Activated CD4-positive, alpha-beta T cell treated with anti-CD3 and anti-CD28 coated beads, Interleukin-2, amount 10 ng/mL, durations not matched to agents 24 days and 14 days (primary cell): ENCODE measurements at regions of chr6 and their contacts with region 1.

Region 1: GRCh38 chr6:43263314-43264178 is 20.3 kb downstream of the TTBK1 start:
- DNase-seq: peak; percentile 93
- H3K4me3 Mint-ChIP-seq: no peak overlapping the region
- H3K27ac Mint-ChIP-seq: no peak overlapping the region
- H3K4me1 Mint-ChIP-seq: peaks cover 2% of the 10 kb centered on the region
- H3K27me3 Mint-ChIP-seq: peaks cover 5% of the 10 kb centered on the region

Region 2: DNA sequence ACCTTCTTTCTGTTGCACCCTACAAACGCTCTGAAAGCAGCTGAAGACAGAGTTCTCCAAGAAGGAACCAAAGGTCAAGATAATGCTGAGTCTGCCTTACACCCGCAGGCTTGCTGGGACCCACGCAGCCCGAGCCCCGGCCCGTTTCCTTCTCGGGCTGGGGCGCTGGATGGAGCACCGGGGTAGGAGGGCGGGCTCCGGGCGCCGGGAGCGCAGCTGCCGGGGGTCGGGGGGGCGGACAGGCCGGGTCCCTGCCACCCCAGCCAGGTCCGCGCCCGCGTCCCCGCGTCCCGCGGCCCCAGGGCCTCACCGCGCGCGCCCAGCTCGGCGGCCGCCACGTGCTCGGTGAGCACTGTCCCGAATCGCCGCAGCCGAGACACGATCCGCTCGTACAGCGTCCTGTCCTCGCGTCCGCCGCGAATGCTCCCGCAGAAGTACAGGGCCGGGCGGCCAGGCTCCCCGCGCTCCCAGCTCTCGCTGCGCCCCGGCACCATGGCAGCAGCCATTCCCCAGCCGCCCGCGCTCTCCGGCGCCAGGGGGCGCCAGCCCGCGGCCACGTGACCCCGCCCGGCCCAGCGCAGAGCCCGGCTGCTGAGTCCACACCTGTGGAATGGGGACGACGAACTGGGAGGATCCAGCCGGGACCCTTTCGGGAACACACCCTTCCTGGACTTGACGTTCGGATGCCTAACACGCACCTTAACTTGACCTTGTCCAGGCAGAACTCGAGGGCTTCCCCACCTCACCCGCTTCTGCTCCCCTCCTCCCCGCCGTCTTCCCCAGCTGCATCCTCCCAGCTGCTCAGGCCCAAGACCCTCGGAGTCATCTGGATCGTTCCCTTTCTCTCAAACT is 34.4 kb before region 1 on chr6 and contains the start of gene DNPH1:
- intact Hi-C with region 1: loop called (anchors 5 kb)
- DNase-seq: peak; percentile 96
- H3K4me3 Mint-ChIP-seq: peak within 1 kb of the TSS; percentile 92
- H3K27ac Mint-ChIP-seq: peak within 1 kb of the TSS; percentile 92
- H3K4me1 Mint-ChIP-seq: peaks cover 31% of the 10 kb centered on the region
- H3K27me3 Mint-ChIP-seq: peaks cover 16% of the 10 kb centered on the region
- total RNA-seq, gene DNPH1: 78.9 and 79.6 TPM in 2 replicates

Region 3: GRCh38 chr6:43246301-43247112 is 17.0 kb before region 1 on chr6:
- intact Hi-C with region 1: no loop called
- DNase-seq: no peak
- H3K4me3 Mint-ChIP-seq: peak overlapping the region; percentile 82
- H3K27ac Mint-ChIP-seq: peak overlapping the region; percentile 91
- H3K4me1 Mint-ChIP-seq: peaks cover 27% of the 10 kb centered on the region
- H3K27me3 Mint-ChIP-seq: peaks cover 28% of the 10 kb centered on the region

Region 4: DNA sequence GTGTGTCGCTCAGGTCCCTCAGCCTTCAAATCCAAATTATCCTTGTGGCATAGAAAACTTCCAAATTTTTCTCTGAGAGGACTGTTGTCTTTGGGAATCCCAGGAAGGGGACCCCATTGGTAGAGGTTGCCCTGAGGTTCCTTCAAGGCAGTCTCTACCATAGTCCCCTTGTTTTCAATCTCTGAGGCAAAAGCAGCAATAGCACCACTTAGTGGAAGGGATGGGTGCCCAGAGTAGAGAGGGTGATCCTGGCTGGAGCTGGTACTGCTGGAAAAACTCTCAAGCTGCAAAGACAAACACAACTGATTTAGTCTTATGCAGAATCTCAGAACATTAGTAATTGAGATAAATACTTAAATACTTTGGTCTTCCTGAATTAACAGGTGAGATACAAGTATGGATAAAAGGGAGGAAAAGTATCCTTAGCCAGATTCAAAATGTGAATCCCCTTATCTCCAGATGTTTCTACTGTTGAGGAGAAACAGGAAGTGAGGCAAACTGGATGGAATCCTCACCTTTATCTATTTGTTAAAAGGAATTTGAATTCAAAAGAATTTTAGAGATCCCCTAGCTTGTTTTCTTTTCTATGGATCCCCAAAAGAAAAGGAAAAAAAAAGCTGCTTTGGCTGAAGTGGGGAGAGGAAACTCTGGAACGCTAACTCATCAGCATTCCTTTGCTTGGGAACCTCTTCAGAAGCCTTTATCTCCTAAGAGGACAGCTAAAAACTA is 92.5 kb after region 1 on chr6:
- intact Hi-C with region 1: loop called (anchors 5 kb)
- DNase-seq: no peak
- H3K4me3 Mint-ChIP-seq: no peak overlapping the region
- H3K27ac Mint-ChIP-seq: no peak overlapping the region
- H3K4me1 Mint-ChIP-seq: peaks cover 2% of the 10 kb centered on the region
- H3K27me3 Mint-ChIP-seq: no peaks in the 10 kb centered on the region

Region 5: GRCh38 chr6:43399932-43400487 is 136.5 kb after region 1 on chr6:
- intact Hi-C with region 1: loop called (anchors 2 kb)
- DNase-seq: no peak
- H3K4me3 Mint-ChIP-seq: no peak overlapping the region
- H3K27ac Mint-ChIP-seq: no peak overlapping the region
- H3K4me1 Mint-ChIP-seq: no peaks in the 10 kb centered on the region
- H3K27me3 Mint-ChIP-seq: peaks cover 35% of the 10 kb centered on the region

Region 6: GRCh38 chr6:43506667-43507471 is 243.3 kb after region 1 on chr6:
- intact Hi-C with region 1: loop called (anchors 2 kb)
- DNase-seq: peak; percentile 95
- H3K4me3 Mint-ChIP-seq: no peak overlapping the region
- H3K27ac Mint-ChIP-seq: no peak overlapping the region
- H3K4me1 Mint-ChIP-seq: peaks cover 12% of the 10 kb centered on the region
- H3K27me3 Mint-ChIP-seq: peaks cover 19% of the 10 kb centered on the region